IMR-90 (cell line): ENCODE measurements at regions of chr17 and their contacts with region 1.

Region 1: GRCh38 chr17:31900877-31901276 is 631 bp downstream of the UTP6 start:
- DNase-seq: peak; percentile 25
- ATAC-seq: peak; percentile 18
- H3K4me3 ChIP-seq: peak overlapping the region; percentile 77
- H3K27ac ChIP-seq: peak overlapping the region; percentile 70
- H3K4me1 ChIP-seq: no peaks in the 10 kb centered on the region
- H3K27me3 ChIP-seq: no peaks in the 10 kb centered on the region
- CTCF ChIP-seq: no peak
- POLR2A ChIP-seq: no peak
- RAD21 ChIP-seq: no peak

Region 2: GRCh38 chr17:31437720-31438420 is 463.0 kb before region 1 on chr17:
- CTCF ChIA-PET with region 1: no interaction called
- POLR2A ChIA-PET with region 1: no interaction called
- dilution Hi-C with region 1: no loop called
- in situ Hi-C with region 1: no loop called
- intact Hi-C with region 1: loop called (anchors 1 kb)
- DNase-seq: no peak
- ATAC-seq: 0 out of 2 replicates have a peak, but pooled peaks have one; percentile 7
- H3K4me3 ChIP-seq: no peak overlapping the region
- H3K27ac ChIP-seq: no peak overlapping the region
- H3K4me1 ChIP-seq: no peaks in the 10 kb centered on the region
- H3K27me3 ChIP-seq: peaks cover 32% of the 10 kb centered on the region
- CTCF ChIP-seq: no peak
- POLR2A ChIP-seq: no peak
- RAD21 ChIP-seq: no peak

Region 3: GRCh38 chr17:31858642-31859473 is 42.0 kb before region 1 on chr17 and contains the start of gene COPRS:
- CTCF ChIA-PET with region 1: no interaction called
- POLR2A ChIA-PET with region 1: no interaction called
- dilution Hi-C with region 1: no loop called
- in situ Hi-C with region 1: no loop called
- intact Hi-C with region 1: loop called (anchors 2 kb)
- DNase-seq: peak; percentile 81
- ATAC-seq: peak; percentile 92
- H3K4me3 ChIP-seq: peak within 1 kb of the TSS; percentile 97
- H3K27ac ChIP-seq: peak within 1 kb of the TSS; percentile 67
- H3K4me1 ChIP-seq: peaks cover 4% of the 10 kb centered on the region
- H3K27me3 ChIP-seq: no peaks in the 10 kb centered on the region
- CTCF ChIP-seq: peak; percentile 23; the same call in 1 of the 2 replicates
- POLR2A ChIP-seq: peak; percentile 61; the same call in 1 of the 2 replicates
- RAD21 ChIP-seq: peak; percentile 18; the same call in 1 of the 2 replicates
- total RNA-seq, gene COPRS: 123 and 141 TPM in 2 replicates

Region 4: DNA sequence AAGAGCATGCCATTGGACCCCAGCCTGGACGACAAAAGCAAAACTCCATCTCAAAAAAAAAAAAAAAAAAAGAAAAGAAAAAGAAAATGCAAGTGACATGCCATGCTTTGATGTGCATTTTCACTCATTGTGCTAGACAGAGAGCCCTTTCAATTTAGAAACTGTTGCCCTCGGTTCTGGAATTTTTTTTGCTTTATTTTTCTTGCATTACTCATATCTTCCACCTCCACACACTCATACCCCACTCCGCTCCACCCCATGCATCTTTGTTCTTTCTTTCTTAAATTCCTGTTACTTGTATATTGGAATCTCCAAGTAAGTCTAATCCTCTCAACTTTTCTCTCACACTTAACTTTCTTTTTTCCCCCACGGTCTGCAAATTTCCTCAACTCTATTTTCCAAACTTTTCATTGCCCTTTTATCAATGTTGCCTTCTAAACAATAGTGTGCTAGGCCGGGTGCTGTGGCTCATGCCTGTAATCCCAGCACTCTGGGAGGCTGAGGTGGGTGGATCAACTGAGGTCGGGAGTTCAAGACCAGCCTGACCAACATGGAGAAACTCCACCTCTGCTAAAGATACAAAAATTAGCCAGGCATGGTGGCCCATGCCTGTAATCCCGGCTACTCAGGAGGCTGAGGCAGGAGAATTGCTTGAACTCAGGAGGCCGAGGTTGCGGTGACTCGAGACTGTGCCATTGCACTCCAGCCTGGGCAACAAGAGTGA is 19.1 kb after region 1 on chr17:
- CTCF ChIA-PET with region 1: no interaction called
- POLR2A ChIA-PET with region 1: no interaction called
- dilution Hi-C with region 1: no loop called
- in situ Hi-C with region 1: no loop called
- intact Hi-C with region 1: no loop called
- DNase-seq: peak; percentile 78
- ATAC-seq: peak; percentile 81
- H3K4me3 ChIP-seq: no peak overlapping the region
- H3K27ac ChIP-seq: peak overlapping the region; percentile 84
- H3K4me1 ChIP-seq: peaks cover 8% of the 10 kb centered on the region
- H3K27me3 ChIP-seq: no peaks in the 10 kb centered on the region
- CTCF ChIP-seq: no peak
- POLR2A ChIP-seq: no peak
- RAD21 ChIP-seq: no peak

Region 5: GRCh38 chr17:31997005-31997404 is 96.1 kb after region 1 on chr17:
- CTCF ChIA-PET with region 1: no interaction called
- POLR2A ChIA-PET with region 1: no interaction called
- dilution Hi-C with region 1: no loop called
- in situ Hi-C with region 1: no loop called
- intact Hi-C with region 1: loop called (anchors 10 kb)
- DNase-seq: no peak
- ATAC-seq: no peak
- H3K4me3 ChIP-seq: no peak overlapping the region
- H3K27ac ChIP-seq: no peak overlapping the region
- H3K4me1 ChIP-seq: no peaks in the 10 kb centered on the region
- H3K27me3 ChIP-seq: no peaks in the 10 kb centered on the region
- CTCF ChIP-seq: no peak
- POLR2A ChIP-seq: no peak
- RAD21 ChIP-seq: no peak